Activated B cell treated with CpG ODN at 0.5 μM for 24 hours (primary cell): ENCODE measurements at regions of chr12 and their contacts with region 1.

Region 1: DNA sequence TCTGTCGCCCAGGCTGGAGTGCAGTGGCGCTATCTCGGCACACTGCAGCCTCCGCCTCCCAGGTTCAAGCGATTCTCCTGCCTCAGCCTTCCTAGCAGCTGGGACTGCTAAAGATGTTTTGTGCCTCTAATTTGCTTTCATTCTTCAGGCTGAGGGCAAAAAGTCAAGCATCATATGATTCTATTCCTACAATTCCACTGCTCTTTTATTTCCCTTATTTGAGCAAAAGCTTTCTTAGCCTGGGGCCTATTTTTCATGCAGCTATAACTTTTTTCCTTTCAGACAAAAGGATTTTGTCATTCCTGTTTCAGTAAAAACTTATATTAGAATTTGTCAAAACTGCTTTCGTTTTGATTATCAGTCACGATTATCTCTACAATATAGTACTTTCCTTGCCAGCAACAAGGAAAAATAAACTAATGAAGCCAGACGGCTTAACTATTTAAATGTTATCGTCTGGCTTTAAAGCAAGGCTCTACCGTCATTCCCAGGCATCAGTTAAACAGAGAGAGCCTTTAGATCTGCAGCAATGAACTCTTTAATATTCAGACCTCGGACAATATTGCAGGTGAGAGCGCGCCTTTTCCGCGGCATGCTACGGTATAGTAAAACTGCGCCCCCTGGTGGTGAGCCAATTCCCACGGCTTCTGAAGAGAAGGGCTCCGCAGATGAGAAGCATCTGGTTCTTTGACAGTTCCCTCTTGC is 1.4 kb upstream of the SLC2A13 start:
- DNase-seq: peak; percentile 76
- ATAC-seq: peak; percentile 45
- H3K4me3 Mint-ChIP-seq: peak overlapping the region; percentile 87
- H3K27ac Mint-ChIP-seq: peak overlapping the region; percentile 73
- H3K4me1 Mint-ChIP-seq: peaks cover 45% of the 10 kb centered on the region
- H3K27me3 Mint-ChIP-seq: no peaks in the 10 kb centered on the region
- CTCF ChIP-seq: no peak

Region 2: DNA sequence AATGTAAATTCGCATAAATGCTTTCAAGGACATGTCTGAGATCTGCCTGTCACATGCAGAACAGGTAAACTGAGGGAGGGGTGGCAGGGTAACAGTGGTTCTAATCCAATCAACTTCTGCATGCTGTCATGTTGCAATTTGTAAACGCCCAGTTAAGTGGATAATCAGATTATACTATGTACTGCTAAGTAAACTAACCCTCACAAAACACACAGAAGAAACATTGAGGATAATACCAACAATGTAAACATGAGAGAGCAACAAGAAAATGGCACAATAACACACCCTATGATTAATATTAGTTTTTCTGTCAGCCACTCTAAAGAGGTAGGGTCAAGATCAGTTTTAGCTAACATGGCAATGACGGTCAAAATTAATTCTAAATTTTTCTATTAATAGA is 788.1 kb before region 1 on chr12:
- CTCF ChIA-PET with region 1: no interaction called
- POLR2A ChIA-PET with region 1: no interaction called
- intact Hi-C with region 1: loop called (anchors 1 kb)
- DNase-seq: no peak
- ATAC-seq: no peak
- H3K4me3 Mint-ChIP-seq: no peak overlapping the region
- H3K27ac Mint-ChIP-seq: no peak overlapping the region
- H3K4me1 Mint-ChIP-seq: no peaks in the 10 kb centered on the region
- H3K27me3 Mint-ChIP-seq: no peaks in the 10 kb centered on the region
- CTCF ChIP-seq: no peak

Region 3: GRCh38 chr12:39619660-39620433 is 487.4 kb before region 1 on chr12 and contains the start of gene ABCD2:
- CTCF ChIA-PET with region 1: no interaction called
- POLR2A ChIA-PET with region 1: no interaction called
- intact Hi-C with region 1: loop called (anchors 2 kb)
- DNase-seq: peak; percentile 46
- ATAC-seq: peak; percentile 86
- H3K4me3 Mint-ChIP-seq: no peak within 1 kb of the TSS
- H3K27ac Mint-ChIP-seq: no peak within 1 kb of the TSS
- H3K4me1 Mint-ChIP-seq: peaks cover 23% of the 10 kb centered on the region
- H3K27me3 Mint-ChIP-seq: no peaks in the 10 kb centered on the region
- CTCF ChIP-seq: no peak
- total RNA-seq, gene ABCD2: 1.4 and 1.8 TPM in 2 replicates

Region 4: GRCh38 chr12:40117818-40118217 is 10.6 kb after region 1 on chr12:
- CTCF ChIA-PET with region 1: interaction called, 14 read pairs
- POLR2A ChIA-PET with region 1: interaction called, 16 read pairs
- intact Hi-C with region 1: no loop called
- DNase-seq: no peak
- ATAC-seq: peak; percentile 64
- H3K4me3 Mint-ChIP-seq: peak overlapping the region; percentile 24
- H3K27ac Mint-ChIP-seq: peak overlapping the region; percentile 55
- H3K4me1 Mint-ChIP-seq: peaks cover 12% of the 10 kb centered on the region
- H3K27me3 Mint-ChIP-seq: no peaks in the 10 kb centered on the region
- CTCF ChIP-seq: no peak

Region 5: GRCh38 chr12:40192704-40193255 is 85.5 kb after region 1 on chr12:
- CTCF ChIA-PET with region 1: no interaction called
- POLR2A ChIA-PET with region 1: no interaction called
- intact Hi-C with region 1: loop called (anchors 2 kb)
- DNase-seq: peak; percentile 50
- ATAC-seq: peak; percentile 96
- H3K4me3 Mint-ChIP-seq: peak overlapping the region; percentile 83
- H3K27ac Mint-ChIP-seq: peak overlapping the region; percentile 93
- H3K4me1 Mint-ChIP-seq: peaks cover 45% of the 10 kb centered on the region
- H3K27me3 Mint-ChIP-seq: no peaks in the 10 kb centered on the region
- CTCF ChIP-seq: no peak

Region 6: GRCh38 chr12:40312982-40313576 is 205.8 kb after region 1 on chr12:
- CTCF ChIA-PET with region 1: interaction called, 4 read pairs
- POLR2A ChIA-PET with region 1: interaction called, 3 read pairs
- intact Hi-C with region 1: loop called (anchors 1 kb)
- DNase-seq: no peak
- ATAC-seq: no peak
- H3K4me3 Mint-ChIP-seq: no peak overlapping the region
- H3K27ac Mint-ChIP-seq: peak overlapping the region; percentile 69
- H3K4me1 Mint-ChIP-seq: peaks cover 35% of the 10 kb centered on the region
- H3K27me3 Mint-ChIP-seq: no peaks in the 10 kb centered on the region
- CTCF ChIP-seq: peak; percentile 60